ENCODE measurements at regions of chrX and their contacts with region 1.

Region 1: DNA sequence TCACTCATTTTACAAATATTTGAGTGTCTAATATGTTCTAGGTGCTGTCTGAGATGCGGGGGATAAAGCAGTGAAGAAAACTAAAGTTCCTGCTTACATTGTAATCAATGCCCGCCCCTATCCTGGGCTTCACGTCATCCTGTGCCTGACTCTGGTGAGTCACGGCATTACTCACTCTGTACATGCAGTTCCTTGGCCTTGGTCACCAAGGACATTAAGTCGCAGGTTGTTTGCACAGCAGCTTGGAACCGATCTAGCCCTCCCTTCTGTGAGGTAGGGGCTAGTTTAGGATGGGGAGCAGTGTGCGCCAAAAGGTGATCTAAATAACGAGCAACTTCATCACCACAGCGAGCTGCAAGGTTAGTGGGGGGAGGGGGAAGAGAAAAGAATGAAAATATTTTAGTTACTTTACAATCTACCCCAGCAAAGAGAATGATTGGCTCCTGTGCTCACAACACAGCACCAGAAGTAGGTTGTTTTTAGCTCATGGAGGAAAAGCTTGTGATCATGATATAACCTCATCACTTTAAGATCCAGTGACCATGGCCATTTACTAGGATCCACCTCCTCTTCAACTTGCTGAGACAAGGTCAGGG is 48.0 kb upstream of the HDAC8 start:
- DNase-seq: peak; percentile 4
- H3K4me3 Mint-ChIP-seq: peak overlapping the region; percentile 78
- H3K27ac Mint-ChIP-seq: peak overlapping the region; percentile 97
- H3K4me1 Mint-ChIP-seq: peaks cover 29% of the 10 kb centered on the region
- H3K27me3 Mint-ChIP-seq: peaks cover 3% of the 10 kb centered on the region

Region 2: GRCh38 chrX:72142094-72142793 is 478.4 kb before region 1 on chrX:
- intact Hi-C with region 1: loop called (anchors 10 kb)
- DNase-seq: no peak
- H3K4me3 Mint-ChIP-seq: no peak overlapping the region
- H3K27ac Mint-ChIP-seq: no peak overlapping the region
- H3K4me1 Mint-ChIP-seq: peaks cover 33% of the 10 kb centered on the region
- H3K27me3 Mint-ChIP-seq: peaks cover 28% of the 10 kb centered on the region

Region 3: DNA sequence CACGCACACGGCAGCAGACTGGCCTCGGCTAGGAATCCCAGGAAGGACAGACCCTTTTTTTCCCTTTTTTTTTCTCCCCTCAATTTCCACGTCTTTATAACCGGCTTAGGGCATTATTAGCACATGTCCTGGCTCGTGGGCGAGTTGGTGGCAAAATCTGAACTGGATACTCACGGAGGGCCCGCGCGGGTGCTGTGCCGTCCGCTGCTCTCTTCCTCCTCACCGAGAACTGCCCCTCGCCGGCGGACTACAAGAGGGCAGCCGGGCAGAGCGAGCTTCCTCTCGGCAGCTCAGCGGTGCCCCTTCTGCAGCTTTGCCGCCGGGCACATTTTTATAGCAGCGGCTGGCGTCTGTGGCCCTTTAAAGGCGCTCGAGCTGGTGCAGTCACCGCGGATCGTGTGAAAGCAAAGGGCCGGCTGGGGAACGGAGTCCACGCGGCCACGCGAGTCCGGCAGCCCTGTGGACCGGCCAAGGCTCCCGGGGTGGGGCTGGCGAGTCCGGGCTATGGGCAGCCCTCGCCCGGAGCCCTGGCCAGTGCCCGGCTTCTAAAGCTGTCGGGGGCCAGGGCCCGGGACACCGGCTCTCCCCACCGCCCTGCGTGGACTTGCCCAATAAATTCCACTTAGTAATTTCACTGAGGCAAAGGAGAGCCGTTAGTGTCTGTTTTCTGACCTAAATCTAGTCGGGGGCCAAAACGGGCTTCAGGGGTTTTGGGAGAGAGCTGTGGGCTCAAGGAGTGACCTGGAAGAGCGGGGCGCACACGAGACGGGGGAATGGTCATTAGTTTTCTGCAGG is 313.6 kb before region 1 on chrX:
- intact Hi-C with region 1: loop called (anchors 5 kb)
- DNase-seq: no peak
- H3K4me3 Mint-ChIP-seq: peak overlapping the region; percentile 83
- H3K27ac Mint-ChIP-seq: peak overlapping the region; percentile 44
- H3K4me1 Mint-ChIP-seq: peaks cover 24% of the 10 kb centered on the region
- H3K27me3 Mint-ChIP-seq: peaks cover 57% of the 10 kb centered on the region

Region 4: DNA sequence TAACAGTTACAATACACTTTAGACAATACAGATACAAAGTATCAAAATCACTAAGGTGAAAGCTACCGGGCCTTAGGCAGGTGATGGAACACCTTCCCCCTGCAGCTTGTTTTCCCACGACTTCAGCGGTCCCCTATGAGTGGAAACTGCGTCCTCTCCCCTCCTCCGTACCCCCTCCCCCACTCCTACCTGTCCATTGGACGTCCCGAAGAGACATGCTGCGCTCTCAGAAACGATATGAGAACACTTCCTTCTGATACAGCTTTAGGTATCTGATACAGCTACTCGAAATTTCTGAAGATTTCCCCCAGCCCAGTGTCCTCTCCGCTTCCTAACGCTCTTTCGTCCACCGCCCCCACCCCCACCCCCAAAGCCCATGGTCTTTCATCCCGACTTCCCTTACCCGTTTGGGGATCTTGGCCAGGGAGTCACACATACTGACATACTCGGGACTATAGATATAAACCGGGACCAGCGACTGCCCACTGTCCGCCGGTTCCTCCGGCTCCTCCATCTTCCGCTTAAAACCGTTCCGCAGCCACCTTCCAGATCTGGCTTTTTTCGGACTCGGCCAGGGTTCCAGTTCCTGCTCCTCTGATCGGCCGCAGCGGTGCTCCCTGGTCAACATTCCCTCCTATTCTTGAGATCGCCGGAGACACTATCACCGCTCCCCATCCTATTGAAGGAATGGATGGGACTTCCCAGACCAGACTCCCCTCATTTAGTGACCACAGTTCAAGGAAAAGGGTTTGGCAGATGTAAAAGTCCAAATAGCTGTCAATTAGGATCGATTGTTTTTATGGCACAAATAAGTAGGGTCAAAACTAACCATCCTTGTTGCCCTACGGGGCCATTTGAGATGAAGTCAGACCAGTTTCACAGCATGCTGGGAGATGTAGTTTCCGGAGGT is 48.1 kb before region 1 on chrX and contains the start of gene HDAC8:
- intact Hi-C with region 1: loop called (anchors 1 kb)
- DNase-seq: peak; percentile 26
- H3K4me3 Mint-ChIP-seq: peak within 1 kb of the TSS; percentile 98
- H3K27ac Mint-ChIP-seq: peak within 1 kb of the TSS; percentile 95
- H3K4me1 Mint-ChIP-seq: peaks cover 5% of the 10 kb centered on the region
- H3K27me3 Mint-ChIP-seq: peaks cover 2% of the 10 kb centered on the region
- total RNA-seq, gene HDAC8: 29.6 and 30.6 TPM in 2 replicates

Region 5: DNA sequence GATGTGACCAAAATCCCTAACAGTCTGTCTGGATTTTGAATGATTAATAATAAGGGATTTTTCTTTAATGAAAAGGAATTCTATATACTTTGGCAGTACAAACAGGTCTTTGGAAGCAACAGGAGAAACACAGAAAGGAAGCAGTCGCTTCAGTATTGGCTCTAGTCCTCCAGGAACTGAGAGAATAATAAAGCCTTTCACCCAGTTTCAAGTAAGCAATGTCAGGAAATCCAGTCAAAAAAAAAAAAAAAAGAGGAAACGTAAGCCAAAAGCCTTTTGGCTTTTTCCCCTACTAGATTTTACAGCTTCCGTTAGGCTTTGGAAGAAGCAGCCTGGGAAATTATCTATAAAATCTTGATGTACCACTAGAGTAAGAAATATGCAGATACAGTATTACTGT is 13.7 kb after region 1 on chrX:
- intact Hi-C with region 1: no loop called
- DNase-seq: no peak
- H3K4me3 Mint-ChIP-seq: no peak overlapping the region
- H3K27ac Mint-ChIP-seq: no peak overlapping the region
- H3K4me1 Mint-ChIP-seq: no peaks in the 10 kb centered on the region
- H3K27me3 Mint-ChIP-seq: no peaks in the 10 kb centered on the region

Region 6: GRCh38 chrX:72663737-72664136 is 43.1 kb after region 1 on chrX:
- intact Hi-C with region 1: no loop called
- DNase-seq: no peak
- H3K4me3 Mint-ChIP-seq: peak overlapping the region; percentile 2
- H3K27ac Mint-ChIP-seq: peak overlapping the region; percentile 51
- H3K4me1 Mint-ChIP-seq: peaks cover 16% of the 10 kb centered on the region
- H3K27me3 Mint-ChIP-seq: no peaks in the 10 kb centered on the region

Region 7: GRCh38 chrX:72714476-72714916 is 93.8 kb after region 1 on chrX:
- intact Hi-C with region 1: loop called (anchors 1 kb)
- DNase-seq: no peak
- H3K4me3 Mint-ChIP-seq: peak overlapping the region; percentile 76
- H3K27ac Mint-ChIP-seq: peak overlapping the region; percentile 29
- H3K4me1 Mint-ChIP-seq: peaks cover 16% of the 10 kb centered on the region
- H3K27me3 Mint-ChIP-seq: no peaks in the 10 kb centered on the region